ENCODE measurements at regions of chr2 and their contacts with region 1.

Region 1: DNA sequence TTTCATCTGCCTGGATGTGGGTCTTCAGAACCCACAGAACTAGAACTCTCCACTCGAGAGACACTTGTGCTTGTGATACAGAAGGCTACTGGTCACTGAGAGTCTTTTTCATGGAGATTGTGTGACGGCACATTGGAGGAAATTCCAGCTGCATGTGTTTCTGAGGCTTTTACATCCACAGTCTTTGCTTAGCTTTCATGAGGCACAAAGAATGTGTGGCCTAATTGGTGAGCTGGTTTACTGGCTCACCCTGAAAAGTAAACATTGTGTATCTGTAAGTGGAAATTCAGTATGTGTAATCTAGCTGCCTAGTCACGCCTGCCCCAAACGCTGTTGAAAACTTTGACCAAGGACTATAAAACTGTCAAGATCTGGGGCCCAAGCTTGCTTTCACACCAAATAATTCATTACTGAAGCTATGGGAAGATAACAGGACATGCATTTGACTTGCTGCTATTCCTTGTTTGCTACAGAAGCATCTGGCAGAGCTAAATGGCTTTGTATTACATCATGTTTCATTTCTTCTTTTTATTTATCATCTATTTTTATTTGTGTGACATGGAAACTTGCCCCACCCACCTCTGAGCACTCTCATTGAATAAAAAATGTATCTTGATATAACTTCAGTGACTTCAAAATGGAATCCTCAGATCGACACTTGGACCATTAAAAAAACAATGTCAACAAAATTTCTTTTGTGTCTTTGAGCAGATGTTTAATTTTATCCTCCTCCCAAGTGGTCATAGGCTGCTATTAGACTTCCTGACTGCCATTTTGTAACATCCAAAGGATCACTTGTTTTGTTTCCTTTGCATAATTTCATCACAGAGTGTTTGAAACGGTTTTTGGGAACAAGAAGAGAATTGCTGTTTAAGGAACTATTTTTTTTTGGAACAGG is 80.2 kb downstream of the EFEMP1 start:
- DNase-seq: peak; percentile 64
- H3K4me3 Mint-ChIP-seq: no peak overlapping the region
- H3K27ac Mint-ChIP-seq: no peak overlapping the region
- H3K4me1 Mint-ChIP-seq: no peaks in the 10 kb centered on the region
- H3K27me3 Mint-ChIP-seq: no peaks in the 10 kb centered on the region
- CTCF ChIP-seq: no peak

Region 2: DNA sequence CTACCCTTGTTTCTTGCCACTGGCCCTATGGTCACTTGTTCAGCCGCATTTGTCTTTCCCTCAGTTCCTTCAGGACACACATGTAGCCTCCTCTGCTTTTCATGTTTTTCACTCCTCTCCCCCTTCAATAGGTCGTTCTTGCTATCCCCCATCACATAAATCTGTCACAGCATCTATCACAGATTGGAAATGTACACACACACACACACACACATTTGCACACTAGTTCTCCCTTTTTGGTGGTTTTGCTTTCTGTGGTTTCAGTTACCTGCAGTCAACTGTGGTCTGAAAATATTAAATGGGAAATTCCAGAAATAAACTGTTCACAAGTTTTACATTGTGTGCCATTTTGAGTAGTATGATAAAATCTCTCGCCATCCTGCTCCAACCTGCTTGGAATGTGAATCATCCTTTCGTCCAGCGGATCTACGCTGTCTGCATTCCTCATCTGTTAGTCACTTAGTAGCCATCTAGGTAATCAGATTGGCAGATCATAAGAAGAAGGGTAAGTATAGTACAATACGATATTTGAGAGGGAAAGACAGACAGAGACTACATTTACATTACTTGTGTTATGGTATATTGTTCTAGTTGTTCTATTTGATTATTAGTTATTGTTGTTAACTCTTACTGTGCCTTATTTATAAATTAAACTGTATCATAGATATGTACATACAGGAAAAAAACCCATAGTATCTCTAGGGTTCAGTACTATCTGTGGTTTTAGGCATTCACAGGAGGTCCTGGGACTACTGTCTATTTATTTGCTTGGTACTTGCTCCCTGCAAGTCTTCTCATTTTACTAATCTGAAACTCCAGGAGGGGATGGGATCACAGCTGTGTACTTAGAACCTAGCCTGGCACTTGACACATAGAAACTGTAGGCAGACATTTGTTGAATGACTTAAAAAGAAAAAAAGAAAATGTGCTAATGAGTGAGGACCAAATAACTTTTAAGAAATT is 63.6 kb before region 1 on chr2:
- CTCF ChIA-PET with region 1: interaction called, 3 read pairs
- POLR2A ChIA-PET with region 1: interaction called, 10 read pairs
- intact Hi-C with region 1: loop called (anchors 5 kb)
- DNase-seq: peak; percentile 90
- H3K4me3 Mint-ChIP-seq: peak overlapping the region; percentile 41
- H3K27ac Mint-ChIP-seq: peak overlapping the region; percentile 97
- H3K4me1 Mint-ChIP-seq: peaks cover 36% of the 10 kb centered on the region
- H3K27me3 Mint-ChIP-seq: no peaks in the 10 kb centered on the region
- CTCF ChIP-seq: no peak

Region 3: GRCh38 chr2:55809875-55810621 is 33.3 kb before region 1 on chr2:
- CTCF ChIA-PET with region 1: interaction called, 3 read pairs
- POLR2A ChIA-PET with region 1: interaction called, 24 read pairs
- intact Hi-C with region 1: no loop called
- DNase-seq: peak; percentile 91
- H3K4me3 Mint-ChIP-seq: peak overlapping the region; percentile 47
- H3K27ac Mint-ChIP-seq: peak overlapping the region; percentile 94
- H3K4me1 Mint-ChIP-seq: peaks cover 28% of the 10 kb centered on the region
- H3K27me3 Mint-ChIP-seq: no peaks in the 10 kb centered on the region
- CTCF ChIP-seq: no peak

Region 4: DNA sequence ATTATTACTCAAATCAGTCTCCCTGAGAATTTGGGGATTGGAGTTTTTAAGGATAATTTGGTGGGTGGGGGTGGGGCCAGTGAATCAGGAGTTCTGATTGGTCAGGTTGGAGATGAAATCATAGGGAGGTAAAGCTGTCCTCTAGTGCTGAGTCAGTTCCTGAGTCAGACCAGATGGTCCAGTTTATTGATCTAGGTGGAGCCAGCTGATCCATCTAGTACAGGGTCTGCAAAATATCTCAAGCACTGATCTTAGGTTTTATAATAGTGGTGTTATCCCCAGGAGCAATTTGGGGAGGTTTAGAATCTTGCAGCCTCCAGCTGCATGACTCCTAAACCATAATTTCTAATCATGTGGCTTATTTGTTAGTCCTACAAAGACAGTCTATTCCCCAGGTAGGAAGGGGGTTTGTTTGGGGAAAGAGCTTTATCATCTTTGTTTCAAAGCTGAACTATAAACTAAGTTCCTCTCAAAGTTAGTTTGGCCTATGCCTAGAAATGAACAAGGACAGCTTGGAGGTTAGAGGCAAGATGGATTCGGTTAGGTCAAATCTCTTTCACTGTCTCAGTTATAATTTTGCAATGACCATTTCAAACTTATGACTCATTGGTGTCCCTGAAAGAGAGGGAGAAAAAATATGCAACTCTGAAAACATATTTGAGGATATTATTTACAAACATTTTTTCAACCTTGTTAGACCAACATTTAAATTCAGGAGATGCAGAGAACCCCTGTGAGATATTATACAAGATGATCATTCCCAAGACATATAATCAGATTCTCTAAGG is 15.7 kb before region 1 on chr2:
- CTCF ChIA-PET with region 1: no interaction called
- POLR2A ChIA-PET with region 1: interaction called, 11 read pairs
- intact Hi-C with region 1: no loop called
- DNase-seq: peak; percentile 38
- H3K4me3 Mint-ChIP-seq: no peak overlapping the region
- H3K27ac Mint-ChIP-seq: peak overlapping the region; percentile 64
- H3K4me1 Mint-ChIP-seq: peaks cover 18% of the 10 kb centered on the region
- H3K27me3 Mint-ChIP-seq: no peaks in the 10 kb centered on the region
- CTCF ChIP-seq: no peak

Region 5: DNA sequence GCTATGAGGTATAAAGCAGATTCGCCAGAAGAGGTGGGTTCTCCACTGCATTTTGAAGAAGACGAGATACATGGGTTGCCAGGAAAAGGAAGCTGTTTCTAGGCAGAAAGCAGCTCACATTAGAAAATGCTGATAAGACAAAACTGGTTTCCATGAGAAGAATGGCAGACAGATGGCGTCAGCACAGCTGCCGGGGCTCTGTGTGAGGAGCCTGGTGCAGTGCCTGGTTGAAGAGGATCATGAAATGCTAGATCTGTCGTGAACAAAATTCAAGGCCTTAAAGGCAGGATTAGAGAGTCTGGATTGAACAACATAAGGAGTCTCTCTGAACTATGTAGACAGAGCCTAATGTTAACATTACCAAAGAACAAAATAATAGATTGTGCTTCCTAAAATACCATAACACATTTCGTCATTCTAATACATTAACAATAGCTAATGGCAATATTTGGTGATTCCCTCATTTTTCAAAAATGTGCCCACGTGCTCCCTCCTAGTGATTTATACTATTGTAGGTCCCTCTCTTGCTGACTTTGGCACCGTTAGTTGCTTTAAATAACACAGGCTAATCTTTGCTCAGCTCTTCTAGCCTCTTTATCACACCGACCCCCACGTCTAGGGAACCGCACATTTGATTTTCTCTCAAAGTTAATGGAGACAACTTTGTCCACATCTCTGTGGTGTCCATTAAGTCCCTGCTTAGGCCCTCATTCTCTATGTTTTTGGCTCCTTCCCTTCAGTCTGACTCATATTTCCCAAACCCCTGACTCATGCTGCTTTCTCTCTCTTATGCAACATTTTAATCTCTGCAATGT is 42.0 kb after region 1 on chr2:
- CTCF ChIA-PET with region 1: no interaction called
- POLR2A ChIA-PET with region 1: interaction called, 10 read pairs
- intact Hi-C with region 1: no loop called
- DNase-seq: peak; percentile 91
- H3K4me3 Mint-ChIP-seq: no peak overlapping the region
- H3K27ac Mint-ChIP-seq: peak overlapping the region; percentile 97
- H3K4me1 Mint-ChIP-seq: peaks cover 64% of the 10 kb centered on the region
- H3K27me3 Mint-ChIP-seq: no peaks in the 10 kb centered on the region
- CTCF ChIP-seq: no peak

Measured in MCF 10A (cell line).